Mucosa of descending colon (tissue), 3 donors: ENCODE measurements at regions of chr4 and their contacts with region 1.

Region 1: DNA sequence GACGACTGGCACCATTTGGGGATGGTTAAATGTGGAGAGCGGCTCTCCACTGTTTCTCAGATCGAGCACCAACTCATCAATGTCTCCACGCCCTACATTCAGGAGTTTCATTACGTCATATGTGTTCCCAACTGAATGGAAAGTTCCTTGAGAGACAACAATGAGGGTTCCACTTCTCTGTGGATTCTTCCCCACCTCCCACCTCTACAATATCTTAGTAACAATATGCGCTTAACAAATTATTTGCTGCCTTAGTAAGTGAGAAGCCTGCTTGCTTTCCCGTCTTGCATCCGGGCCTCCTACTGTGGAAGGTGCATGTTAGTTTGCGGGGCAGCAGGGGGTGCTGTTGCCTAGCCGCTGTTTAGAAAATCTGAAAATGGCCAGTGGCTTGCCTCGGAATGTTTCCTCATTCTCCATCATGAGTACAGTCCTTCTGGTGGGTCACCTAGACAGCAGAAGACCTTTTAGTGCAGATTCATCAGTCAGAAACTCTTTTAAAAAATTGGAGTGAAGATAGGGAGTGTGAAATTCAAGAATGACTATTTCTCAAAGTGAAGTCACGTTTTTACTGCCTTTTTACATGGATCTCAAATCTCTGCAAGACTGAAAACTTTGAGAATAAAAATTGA is 55.7 kb downstream of the PHOX2B start:
- DNase-seq: peak in 2 of 3 donors; percentile 42 to 54
- ATAC-seq: peak; percentile 89
- H3K4me3 ChIP-seq: no peak overlapping the region
- H3K4me1 ChIP-seq: no peaks in the 10 kb centered on the region
- CTCF ChIP-seq: peak; percentile 83

Region 2: GRCh38 chr4:41882625-41883347 is 190.0 kb after region 1 on chr4:
- intact Hi-C with region 1: loop called (anchors 5 kb)
- DNase-seq: peak in 2 of 3 donors; percentile 54 to 59
- ATAC-seq: peak; percentile 80
- H3K4me3 ChIP-seq: no peak overlapping the region
- H3K4me1 ChIP-seq: peaks cover 7% of the 10 kb centered on the region
- CTCF ChIP-seq: peak; percentile 83

Region 3: DNA sequence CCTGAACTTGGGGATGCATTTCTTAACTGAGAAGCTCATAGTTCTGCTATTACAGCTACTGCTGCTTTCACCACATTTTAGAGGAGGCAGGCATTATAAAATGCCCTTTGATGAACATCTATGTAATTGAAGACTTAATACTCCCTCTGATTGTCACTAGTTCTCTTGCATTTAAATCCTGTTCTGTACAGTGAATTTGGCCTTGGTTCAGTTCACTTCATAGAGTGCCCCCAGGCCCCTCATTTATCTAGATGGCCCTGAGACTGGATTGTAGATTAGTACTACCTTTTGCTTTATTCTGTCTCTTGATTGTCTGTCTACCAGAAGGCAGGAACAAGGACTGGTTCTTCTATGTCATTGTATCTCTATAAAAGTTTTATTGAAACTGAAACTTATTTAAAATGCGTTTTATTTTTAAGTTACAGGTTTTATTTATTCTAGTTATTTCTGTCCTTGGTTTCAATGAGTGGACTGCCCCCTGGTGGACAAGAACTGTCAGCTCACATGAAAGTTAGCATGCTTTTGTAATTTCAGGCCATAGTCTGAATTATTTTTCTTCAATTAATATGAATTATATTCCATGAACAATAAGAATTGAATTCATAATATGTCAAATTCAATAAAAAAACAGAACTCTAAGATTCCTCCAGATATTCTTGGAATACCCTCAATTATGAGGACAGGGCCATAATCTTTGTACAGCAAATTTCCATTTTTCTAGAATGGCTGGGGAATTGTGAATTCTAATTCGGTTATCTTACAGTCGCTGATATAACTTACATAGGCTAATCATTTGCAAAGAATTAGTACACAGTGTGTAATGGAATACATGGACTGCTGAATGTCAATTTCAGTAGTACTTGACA is 195.2 kb after region 1 on chr4:
- intact Hi-C with region 1: loop called (anchors 5 kb)
- DNase-seq: peak in 1 of 3 donors; percentile 66
- ATAC-seq: no peak
- H3K4me3 ChIP-seq: no peak overlapping the region
- H3K4me1 ChIP-seq: no peaks in the 10 kb centered on the region
- CTCF ChIP-seq: peak; percentile 65